ENCODE measurements at regions of chr7 and their contacts with region 1.

Region 1: GRCh38 chr7:2248984-2249694 is 7.1 kb downstream of the NUDT1 start:
- H3K4me3 Mint-ChIP-seq: peak overlapping the region; percentile 47
- H3K27ac Mint-ChIP-seq: peak overlapping the region; percentile 69
- H3K4me1 Mint-ChIP-seq: peaks cover 97% of the 10 kb centered on the region
- H3K27me3 Mint-ChIP-seq: no peaks in the 10 kb centered on the region

Region 2: DNA sequence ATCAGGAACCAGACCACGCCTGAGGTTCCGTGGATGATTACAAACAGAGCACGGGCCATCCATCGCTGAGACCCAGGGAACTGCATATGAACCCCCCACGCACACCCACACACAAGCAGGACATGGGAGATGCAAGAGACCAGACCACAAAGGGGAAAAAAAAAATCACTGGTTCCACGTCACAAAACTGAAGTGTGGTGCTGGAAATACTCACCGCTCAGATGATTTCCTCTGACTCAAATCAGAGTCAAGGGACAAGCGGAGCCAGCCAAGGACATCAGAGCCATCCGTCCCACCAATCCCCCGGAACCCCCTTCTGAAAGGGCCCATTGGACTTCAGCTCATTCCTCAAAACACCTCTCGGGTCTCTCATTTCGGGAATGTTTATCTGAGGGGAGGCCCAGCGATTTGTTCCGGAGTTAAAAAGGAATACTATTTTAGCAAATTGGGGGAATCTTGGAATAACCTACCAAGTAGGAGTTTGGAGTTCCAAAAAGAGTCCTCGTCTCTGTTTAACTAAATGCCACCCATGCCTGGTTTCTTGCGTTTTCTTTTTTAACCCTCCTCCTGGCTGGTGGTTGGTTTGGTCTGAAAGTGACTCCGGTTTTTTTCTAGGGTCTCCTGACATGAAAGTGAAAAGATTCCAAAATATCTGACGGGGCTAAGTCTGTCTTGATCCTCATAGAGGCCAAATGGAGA is 50.1 kb after region 1 on chr7:
- intact Hi-C with region 1: loop called (anchors 5 kb)
- H3K4me3 Mint-ChIP-seq: peak overlapping the region; percentile 69
- H3K27ac Mint-ChIP-seq: peak overlapping the region; percentile 82
- H3K4me1 Mint-ChIP-seq: peaks cover 84% of the 10 kb centered on the region
- H3K27me3 Mint-ChIP-seq: no peaks in the 10 kb centered on the region

Measured in dendritic cell treated with granulocyte-macrophage colony-stimulating factor and Interleukin-4, amounts not matched to agents 40 ng/mL and 50 ng/mL, for 4 days (primary cell).